Activated CD4-positive, alpha-beta memory T cell treated with anti-CD3 and anti-CD28 coated beads for 36 hours (primary cell): ENCODE measurements at regions of chr1 and their contacts with region 1.

Region 1: DNA sequence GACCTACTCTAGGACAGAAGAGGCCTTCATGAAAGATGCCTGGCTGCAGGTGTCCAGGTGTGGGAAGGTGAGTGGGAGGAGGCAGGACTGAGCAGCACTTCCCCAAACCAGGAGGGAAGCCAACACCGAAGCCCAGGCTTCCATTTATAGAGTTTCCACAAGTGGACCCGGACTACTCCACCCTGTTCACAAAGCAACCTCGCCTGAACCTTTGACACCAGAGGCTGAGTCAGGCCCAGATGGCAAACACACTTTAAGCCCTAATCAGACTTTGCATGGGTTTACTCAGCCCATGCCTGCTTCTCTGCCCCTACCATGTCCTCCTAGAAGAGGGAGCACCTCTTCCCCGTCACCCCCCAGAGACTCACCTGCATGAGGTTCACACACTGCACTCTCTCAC is 14.0 kb downstream of the PRR9 start:
- DNase-seq: no peak
- H3K4me3 Mint-ChIP-seq: no peak overlapping the region
- H3K27ac Mint-ChIP-seq: no peak overlapping the region
- H3K4me1 Mint-ChIP-seq: no peaks in the 10 kb centered on the region
- H3K27me3 Mint-ChIP-seq: peaks cover 12% of the 10 kb centered on the region

Region 2: DNA sequence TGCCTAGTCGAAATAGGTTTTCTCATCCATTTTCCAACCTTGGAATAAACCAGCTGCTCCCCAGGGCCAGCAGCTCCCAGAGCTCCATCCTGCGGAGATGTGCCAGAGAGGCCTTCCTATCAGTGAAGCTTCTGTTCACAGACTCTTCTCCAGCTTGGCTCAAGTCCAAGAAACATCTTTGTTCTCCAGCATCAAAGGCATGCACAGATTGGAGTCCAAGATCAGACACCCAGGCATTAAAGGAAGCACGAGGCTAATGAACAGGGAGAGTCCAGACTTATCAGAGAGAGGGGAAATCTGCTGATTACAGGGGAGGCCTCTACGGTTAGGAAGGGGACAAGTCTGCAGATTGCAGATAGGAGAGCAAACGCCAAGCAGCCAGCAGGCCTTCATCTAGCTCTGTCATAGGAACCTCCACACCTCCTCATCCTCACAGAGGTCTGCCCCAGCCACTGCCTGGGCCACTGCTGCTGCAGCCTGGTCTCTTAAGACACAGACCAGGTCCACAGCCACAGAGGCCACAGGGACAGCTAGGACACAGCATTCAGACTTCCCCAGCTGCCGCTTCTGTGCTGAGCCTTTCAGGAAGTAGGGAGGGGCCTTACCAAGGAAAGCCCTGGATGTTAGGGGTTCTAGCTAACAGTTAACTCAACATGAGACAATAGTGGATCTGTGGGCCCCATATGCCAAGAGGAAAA is 10.6 kb before region 1 on chr1:
- CTCF ChIA-PET with region 1: interaction called, 14 read pairs
- POLR2A ChIA-PET with region 1: no interaction called
- intact Hi-C with region 1: no loop called
- DNase-seq: no peak
- H3K4me3 Mint-ChIP-seq: no peak overlapping the region
- H3K27ac Mint-ChIP-seq: no peak overlapping the region
- H3K4me1 Mint-ChIP-seq: no peaks in the 10 kb centered on the region
- H3K27me3 Mint-ChIP-seq: peaks cover 8% of the 10 kb centered on the region

Region 3: GRCh38 chr1:153277817-153278216 is 46.5 kb after region 1 on chr1:
- CTCF ChIA-PET with region 1: interaction called, 5 read pairs
- POLR2A ChIA-PET with region 1: no interaction called
- intact Hi-C with region 1: loop called (anchors 5 kb)
- DNase-seq: peak; percentile 66
- H3K4me3 Mint-ChIP-seq: no peak overlapping the region
- H3K27ac Mint-ChIP-seq: no peak overlapping the region
- H3K4me1 Mint-ChIP-seq: no peaks in the 10 kb centered on the region
- H3K27me3 Mint-ChIP-seq: peaks cover 12% of the 10 kb centered on the region